Activated T-helper 1 cell treated with anti-CD3 and anti-CD28 coated beads, Interleukin-12 subunit alpha, Interleukin-12 subunit beta, Interleukin-2, Interleukin-4 antibody, amounts not matched to agents 30 ng/mL and 10 ng/mL and 1 ng/mL, durations not matched to agents 14 hours and 24 hours and 36 hours (primary cell): ENCODE measurements at regions of chr15 and their contacts with region 1.

Region 1: GRCh38 chr15:67024314-67024997 is 40.9 kb upstream of the SMAD3 start:
- DNase-seq: no peak
- H3K4me3 Mint-ChIP-seq: peak overlapping the region; percentile 29
- H3K27ac Mint-ChIP-seq: peak overlapping the region; percentile 37
- H3K4me1 Mint-ChIP-seq: peaks cover 45% of the 10 kb centered on the region
- H3K27me3 Mint-ChIP-seq: peaks cover 9% of the 10 kb centered on the region

Region 2: DNA sequence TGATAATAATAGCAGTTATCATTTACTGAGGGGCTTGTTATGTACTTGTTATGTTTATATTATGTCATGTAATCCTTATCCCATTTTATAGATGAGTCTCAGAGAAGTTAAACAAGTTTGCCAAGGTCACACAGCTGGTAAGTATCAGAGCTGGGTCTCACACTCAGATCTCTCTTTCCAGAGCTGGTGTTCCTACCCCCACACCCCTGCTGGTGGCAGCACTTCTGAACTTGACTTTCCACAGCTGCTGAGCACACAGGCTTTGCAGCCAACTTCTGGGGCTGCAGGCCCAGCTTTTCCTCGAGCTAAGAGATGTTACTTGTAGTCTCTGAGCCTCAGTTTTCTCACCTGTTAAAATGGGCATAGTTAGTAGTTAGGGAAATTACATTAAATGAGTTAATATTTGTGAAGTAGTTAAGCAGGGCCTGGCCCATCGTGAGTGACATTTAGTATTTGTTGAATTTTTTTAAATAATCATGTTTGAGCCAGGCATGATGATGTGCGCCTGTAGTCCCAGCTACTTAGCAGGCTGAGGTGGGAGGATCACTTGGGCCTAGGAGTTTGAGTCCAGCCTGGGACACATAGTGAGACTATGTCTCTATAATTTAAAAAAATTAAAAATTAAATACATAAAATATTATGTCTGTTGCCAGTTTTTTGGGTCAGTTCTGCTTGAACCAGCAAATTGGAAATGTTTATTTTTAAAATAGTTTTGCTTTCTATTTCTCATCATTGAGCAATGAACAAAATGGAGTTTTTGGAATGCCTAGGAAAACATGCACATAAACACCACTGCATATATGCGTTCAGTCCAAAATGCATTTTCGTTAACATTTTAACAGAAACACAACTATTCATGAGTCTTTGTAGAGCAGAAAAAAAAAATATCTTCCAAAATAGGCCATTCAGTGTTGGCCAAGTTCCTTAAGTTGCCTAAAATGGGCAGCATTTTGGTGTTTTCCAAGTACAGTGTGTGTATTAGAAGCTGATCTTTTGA is 235.1 kb before region 1 on chr15:
- intact Hi-C with region 1: no loop called
- DNase-seq: no peak
- H3K4me3 Mint-ChIP-seq: no peak overlapping the region
- H3K27ac Mint-ChIP-seq: no peak overlapping the region
- H3K4me1 Mint-ChIP-seq: no peaks in the 10 kb centered on the region
- H3K27me3 Mint-ChIP-seq: no peaks in the 10 kb centered on the region

Region 3: GRCh38 chr15:67039384-67040075 is 15.1 kb after region 1 on chr15:
- intact Hi-C with region 1: loop called (anchors 2 kb)
- DNase-seq: no peak
- H3K4me3 Mint-ChIP-seq: peak overlapping the region; percentile 51
- H3K27ac Mint-ChIP-seq: peak overlapping the region; percentile 77
- H3K4me1 Mint-ChIP-seq: peaks cover 22% of the 10 kb centered on the region
- H3K27me3 Mint-ChIP-seq: peaks cover 3% of the 10 kb centered on the region

Region 4: DNA sequence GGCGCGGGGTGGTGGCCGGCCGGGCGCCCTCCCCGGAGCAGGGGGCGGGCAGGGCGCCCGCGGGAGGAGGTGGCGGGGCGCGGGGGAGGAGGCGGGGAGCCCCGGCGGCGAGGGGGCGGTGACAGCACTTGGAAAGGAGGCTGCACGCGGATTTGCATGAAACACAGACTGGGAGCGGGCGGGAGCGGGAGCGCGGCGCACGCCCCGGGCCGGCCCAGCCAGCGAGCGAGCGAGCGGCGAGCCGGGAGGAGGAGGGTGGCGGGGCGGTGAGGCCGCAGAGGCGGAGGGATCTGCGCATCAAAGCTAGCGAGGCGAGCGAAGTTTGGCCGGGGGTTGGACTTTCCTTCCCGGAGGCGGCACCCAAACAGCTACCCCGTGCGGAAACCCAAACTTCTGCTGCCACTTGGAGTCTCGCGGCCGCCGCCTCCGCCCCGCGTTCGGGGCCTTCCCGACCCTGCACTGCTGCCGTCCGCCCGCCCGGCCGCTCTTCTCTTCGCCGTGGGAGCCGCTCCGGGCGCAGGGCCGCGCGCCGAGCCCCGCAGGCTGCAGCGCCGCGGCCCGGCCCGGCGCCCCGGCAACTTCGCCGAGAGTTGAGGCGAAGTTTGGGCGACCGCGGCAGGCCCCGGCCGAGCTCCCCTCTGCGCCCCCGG is 41.1 kb after region 1 on chr15 and contains the start of gene SMAD3:
- intact Hi-C with region 1: loop called (anchors 2 kb)
- DNase-seq: peak; percentile 81
- H3K4me3 Mint-ChIP-seq: peak within 1 kb of the TSS; percentile 100
- H3K27ac Mint-ChIP-seq: peak within 1 kb of the TSS; percentile 95
- H3K4me1 Mint-ChIP-seq: peaks cover 65% of the 10 kb centered on the region
- H3K27me3 Mint-ChIP-seq: peaks cover 3% of the 10 kb centered on the region
- total RNA-seq, gene SMAD3: 80.2 and 80.4 TPM in 2 replicates

Region 5: DNA sequence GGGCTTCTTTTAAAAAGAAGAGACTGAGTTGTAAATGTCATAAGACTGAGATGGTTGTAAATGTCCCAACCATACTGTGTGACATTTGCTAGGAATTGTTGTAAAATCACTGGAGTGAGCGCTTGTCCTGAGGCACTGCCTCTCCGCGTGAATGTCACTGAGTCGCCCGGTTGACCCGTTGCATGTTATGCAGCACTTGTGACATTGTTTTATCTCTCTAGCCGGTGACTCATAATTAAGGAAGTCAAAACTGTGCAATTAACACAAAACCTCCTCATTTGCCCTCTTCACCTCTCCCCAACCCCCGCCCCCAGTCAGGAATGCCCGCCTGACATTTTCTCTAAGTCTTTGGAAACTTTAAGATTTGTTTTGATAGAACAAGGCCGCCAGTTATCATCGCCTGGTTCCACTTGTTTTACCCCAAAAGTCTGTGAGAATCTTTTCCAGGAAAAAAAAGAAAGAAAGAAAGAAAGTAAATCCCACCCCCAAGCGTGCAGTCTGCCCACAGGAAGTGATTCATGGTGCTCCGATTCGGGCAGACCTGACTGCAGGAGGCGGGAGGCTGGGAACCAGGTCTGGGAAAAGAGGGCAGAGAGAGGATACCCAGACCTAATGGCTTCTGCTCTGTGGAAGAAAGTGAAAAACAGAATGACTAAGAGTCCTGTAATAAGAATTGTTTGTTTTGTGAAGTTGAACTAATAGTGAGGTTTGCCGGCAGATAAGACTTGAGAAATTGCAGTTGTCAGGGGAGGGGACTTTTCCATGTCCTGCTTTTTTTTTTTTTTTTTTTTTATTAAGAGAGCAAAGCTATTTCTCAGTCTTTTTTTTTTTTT is 125.8 kb after region 1 on chr15:
- intact Hi-C with region 1: loop called (anchors 5 kb)
- DNase-seq: peak; percentile 21
- H3K4me3 Mint-ChIP-seq: peak overlapping the region; percentile 48
- H3K27ac Mint-ChIP-seq: peak overlapping the region; percentile 91
- H3K4me1 Mint-ChIP-seq: peaks cover 80% of the 10 kb centered on the region
- H3K27me3 Mint-ChIP-seq: no peaks in the 10 kb centered on the region